RWPE1 (cell line): ENCODE measurements at regions of chr2 and their contacts with region 1.

Region 1: GRCh38 chr2:62055724-62056336 is 140.1 kb upstream of the B3GNT2 start:
- DNase-seq: no peak
- H3K27ac ChIP-seq: no peak overlapping the region
- CTCF ChIP-seq: no peak

Region 2: GRCh38 chr2:62038975-62039771 is 16.7 kb before region 1 on chr2:
- CTCF ChIA-PET with region 1: no interaction called
- POLR2A ChIA-PET with region 1: interaction called, 10 read pairs
- DNase-seq: peak; percentile 29
- H3K27ac ChIP-seq: no peak overlapping the region
- CTCF ChIP-seq: no peak